ENCODE measurements at regions of chr3 and their contacts with region 1.

Region 1: GRCh38 chr3:19146685-19147650 is 1.3 kb upstream of the KCNH8 start:
- DNase-seq: peak; percentile 60 to 75
- H3K4me3 ChIP-seq: peak overlapping the region; percentile 64
- H3K27ac ChIP-seq: no peak overlapping the region
- H3K4me1 ChIP-seq: 0 out of 2 replicates have a peak, but pooled peaks cover 5% of the 10 kb centered on the region
- H3K27me3 ChIP-seq: no peaks in the 10 kb centered on the region
- CTCF ChIP-seq: peak; percentile 57; the same call in 1 of the 2 replicates

Region 2: GRCh38 chr3:17183951-17184550 is 1962.9 kb before region 1 on chr3:
- CTCF ChIA-PET with region 1: no interaction called
- POLR2A ChIA-PET with region 1: interaction called, 10 read pairs
- intact Hi-C with region 1: no loop called
- DNase-seq: peak in 1 of 2 experiments; percentile 36
- H3K4me3 ChIP-seq: no peak overlapping the region
- H3K27ac ChIP-seq: peak overlapping the region; percentile 50
- H3K4me1 ChIP-seq: peaks cover 8% of the 10 kb centered on the region; the same call in 1 of the 2 replicates
- H3K27me3 ChIP-seq: no peaks in the 10 kb centered on the region
- CTCF ChIP-seq: no peak

Region 3: DNA sequence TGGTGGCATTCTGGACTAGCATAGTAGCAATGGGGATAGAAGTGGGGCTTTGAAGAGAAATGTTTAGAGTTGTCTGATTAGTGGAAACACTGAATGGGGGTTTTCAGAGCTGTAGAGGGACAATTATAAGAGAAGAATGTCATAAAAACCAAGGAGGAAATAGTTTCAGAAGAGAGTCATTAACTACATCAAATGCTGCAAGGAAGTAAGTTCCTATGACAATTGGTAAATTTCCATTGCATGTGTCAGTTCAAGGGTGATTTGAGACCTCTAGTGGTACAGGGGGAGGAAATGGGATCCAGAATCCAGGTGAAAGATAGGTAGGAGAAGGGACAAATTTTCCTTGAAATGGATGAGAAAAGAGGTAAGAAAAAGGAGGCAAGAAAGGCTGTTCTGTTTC is 1336.2 kb before region 1 on chr3:
- CTCF ChIA-PET with region 1: no interaction called
- POLR2A ChIA-PET with region 1: no interaction called
- intact Hi-C with region 1: no loop called
- DNase-seq: peak in 1 of 2 experiments; percentile 62
- H3K4me3 ChIP-seq: no peak overlapping the region
- H3K27ac ChIP-seq: no peak overlapping the region
- H3K4me1 ChIP-seq: peaks cover 7% of the 10 kb centered on the region
- H3K27me3 ChIP-seq: no peaks in the 10 kb centered on the region
- CTCF ChIP-seq: peak; percentile 37; the same call in 1 of the 2 replicates

Region 4: GRCh38 chr3:19173945-19174344 is 27.0 kb after region 1 on chr3:
- CTCF ChIA-PET with region 1: no interaction called
- POLR2A ChIA-PET with region 1: interaction called, 13 read pairs
- intact Hi-C with region 1: no loop called
- DNase-seq: no peak
- H3K4me3 ChIP-seq: no peak overlapping the region
- H3K27ac ChIP-seq: no peak overlapping the region
- H3K4me1 ChIP-seq: no peaks in the 10 kb centered on the region
- H3K27me3 ChIP-seq: no peaks in the 10 kb centered on the region
- CTCF ChIP-seq: 0 out of 2 replicates have a peak, but pooled peaks have one; percentile 23